ENCODE measurements at regions of chr20 and their contacts with region 1.

Region 1: GRCh38 chr20:20561841-20562240 is 150.6 kb downstream of the RALGAPA2 start:
- DNase-seq: no peak
- ATAC-seq: no peak
- H3K4me3 ChIP-seq: no peak overlapping the region
- H3K27ac ChIP-seq: no peak overlapping the region
- H3K4me1 ChIP-seq: no peaks in the 10 kb centered on the region
- H3K27me3 ChIP-seq: no peaks in the 10 kb centered on the region
- CTCF ChIP-seq: no peak
- POLR2A ChIP-seq: no peak
- RAD21 ChIP-seq: no peak

Region 2: DNA sequence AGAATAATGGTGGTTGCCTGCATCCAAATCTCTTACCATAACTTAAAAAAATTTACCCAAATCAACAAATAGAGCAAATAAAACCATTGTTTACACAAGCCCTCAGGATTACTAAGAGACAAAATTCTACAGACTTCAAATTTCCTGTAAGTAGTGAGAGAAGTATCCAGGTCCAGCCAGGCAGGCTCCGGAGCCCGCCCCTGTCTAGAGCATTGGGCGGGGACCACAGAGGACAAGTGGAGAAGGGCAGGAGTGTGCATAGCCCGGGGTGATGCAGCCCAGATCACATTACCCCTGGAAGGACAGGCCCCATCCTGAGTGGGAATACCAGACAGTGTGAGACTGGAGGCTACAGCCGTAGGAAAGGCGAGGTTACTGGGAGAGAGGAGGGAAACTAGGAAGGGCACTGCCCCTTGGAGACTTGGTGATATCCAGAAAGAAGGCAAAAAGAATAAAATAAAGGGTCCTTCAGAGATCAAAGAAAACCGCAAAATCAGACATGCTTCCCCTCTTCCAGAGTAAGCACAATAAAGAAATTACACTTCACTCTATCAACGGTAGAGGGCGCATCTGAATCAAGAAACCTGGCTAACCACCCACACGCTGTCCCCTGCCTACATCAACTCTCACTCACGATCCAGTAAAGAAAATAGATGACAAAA is 777.2 kb before region 1 on chr20:
- CTCF ChIA-PET with region 1: no interaction called
- POLR2A ChIA-PET with region 1: no interaction called
- dilution Hi-C with region 1: no loop called
- in situ Hi-C with region 1: no loop called
- intact Hi-C with region 1: no loop called
- DNase-seq: peak; percentile 91
- ATAC-seq: peak; percentile 74
- H3K4me3 ChIP-seq: no peak overlapping the region
- H3K27ac ChIP-seq: peak overlapping the region; percentile 94
- H3K4me1 ChIP-seq: peaks cover 22% of the 10 kb centered on the region
- H3K27me3 ChIP-seq: no peaks in the 10 kb centered on the region
- CTCF ChIP-seq: peak; percentile 87
- POLR2A ChIP-seq: peak; percentile 39; the same call in 1 of the 2 replicates
- RAD21 ChIP-seq: peak; percentile 97

Region 3: DNA sequence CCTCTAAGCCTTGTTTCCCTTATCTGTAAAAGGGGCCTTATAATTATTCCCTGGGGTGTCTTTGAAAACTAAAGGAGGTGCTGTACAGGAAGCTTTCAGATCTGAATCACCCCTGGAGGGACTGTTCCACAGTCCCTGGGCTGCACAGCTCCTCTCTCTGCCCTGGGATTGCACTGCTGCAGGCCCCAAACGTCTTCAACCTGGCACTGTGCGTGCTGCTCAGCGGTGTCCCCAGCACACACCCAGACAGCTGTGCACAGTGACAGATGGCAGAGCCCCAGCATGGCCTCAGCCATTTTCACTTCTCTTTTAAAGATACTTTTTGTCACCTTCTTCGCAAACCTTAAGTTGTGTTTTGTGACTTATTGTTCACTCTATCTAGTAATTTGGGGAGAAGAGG is 244.6 kb before region 1 on chr20:
- CTCF ChIA-PET with region 1: no interaction called
- POLR2A ChIA-PET with region 1: no interaction called
- dilution Hi-C with region 1: no loop called
- in situ Hi-C with region 1: no loop called
- intact Hi-C with region 1: no loop called
- DNase-seq: no peak
- ATAC-seq: no peak
- H3K4me3 ChIP-seq: no peak overlapping the region
- H3K27ac ChIP-seq: no peak overlapping the region
- H3K4me1 ChIP-seq: no peaks in the 10 kb centered on the region
- H3K27me3 ChIP-seq: no peaks in the 10 kb centered on the region
- CTCF ChIP-seq: no peak
- POLR2A ChIP-seq: no peak
- RAD21 ChIP-seq: no peak

Region 4: GRCh38 chr20:20360464-20360863 is 201.4 kb before region 1 on chr20:
- CTCF ChIA-PET with region 1: no interaction called
- POLR2A ChIA-PET with region 1: interaction called, 20 read pairs
- dilution Hi-C with region 1: no loop called
- in situ Hi-C with region 1: loop called (anchors 5 kb)
- intact Hi-C with region 1: no loop called
- DNase-seq: peak; percentile 69
- ATAC-seq: peak; percentile 98
- H3K4me3 ChIP-seq: no peak overlapping the region
- H3K27ac ChIP-seq: no peak overlapping the region
- H3K4me1 ChIP-seq: no peaks in the 10 kb centered on the region
- H3K27me3 ChIP-seq: peaks cover 47% of the 10 kb centered on the region
- CTCF ChIP-seq: peak; percentile 92
- POLR2A ChIP-seq: no peak
- RAD21 ChIP-seq: peak; percentile 86

Region 5: DNA sequence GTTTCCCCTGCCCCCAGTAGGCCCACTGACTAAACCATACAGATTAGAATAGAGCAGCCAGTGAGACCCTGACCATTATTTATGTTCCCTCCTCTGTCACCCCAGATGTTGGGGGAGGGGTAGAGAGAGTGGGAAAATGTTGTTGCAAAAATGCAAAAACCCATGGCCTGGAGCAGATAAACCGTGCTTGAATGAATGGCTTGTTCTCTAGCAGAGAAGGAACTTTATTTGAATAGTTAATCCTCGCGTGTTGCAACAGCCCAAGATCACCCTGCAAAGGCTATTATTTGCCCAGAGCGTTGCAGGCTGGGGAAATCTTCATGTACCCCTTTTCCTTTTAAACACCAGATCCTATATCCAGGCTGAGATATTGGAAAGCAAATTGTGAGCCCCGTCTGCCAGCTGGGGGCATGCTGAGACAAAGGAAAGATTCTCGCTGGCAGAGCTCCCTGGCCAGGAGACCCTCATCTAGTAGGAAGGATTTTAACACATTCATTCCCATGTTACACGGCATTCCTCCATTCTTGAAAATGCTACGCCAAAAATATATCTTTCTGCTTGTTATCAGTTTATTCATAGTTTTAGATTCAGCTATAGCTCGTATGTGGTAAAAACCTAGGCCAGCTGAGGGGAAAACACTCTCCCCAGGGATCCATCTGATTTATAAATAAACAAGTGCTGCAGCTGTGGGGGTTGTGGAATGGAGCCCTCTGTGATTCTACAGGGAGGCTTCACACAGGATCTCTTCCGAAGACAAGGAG is 491.3 kb after region 1 on chr20:
- CTCF ChIA-PET with region 1: no interaction called
- POLR2A ChIA-PET with region 1: no interaction called
- dilution Hi-C with region 1: no loop called
- in situ Hi-C with region 1: no loop called
- intact Hi-C with region 1: no loop called
- DNase-seq: no peak
- ATAC-seq: no peak
- H3K4me3 ChIP-seq: no peak overlapping the region
- H3K27ac ChIP-seq: no peak overlapping the region
- H3K4me1 ChIP-seq: no peaks in the 10 kb centered on the region
- H3K27me3 ChIP-seq: no peaks in the 10 kb centered on the region
- CTCF ChIP-seq: no peak
- POLR2A ChIP-seq: no peak
- RAD21 ChIP-seq: no peak

Measured in IMR-90 (cell line).